GM10248 (cell line): ENCODE measurements at regions of chr7 and their contacts with region 1.

Region 1: GRCh38 chr7:29408841-29409243 is 154.8 kb upstream of the PRR15 start:
- DNase-seq: peak; percentile 66
- CTCF ChIP-seq: peak; percentile 83

Region 2: DNA sequence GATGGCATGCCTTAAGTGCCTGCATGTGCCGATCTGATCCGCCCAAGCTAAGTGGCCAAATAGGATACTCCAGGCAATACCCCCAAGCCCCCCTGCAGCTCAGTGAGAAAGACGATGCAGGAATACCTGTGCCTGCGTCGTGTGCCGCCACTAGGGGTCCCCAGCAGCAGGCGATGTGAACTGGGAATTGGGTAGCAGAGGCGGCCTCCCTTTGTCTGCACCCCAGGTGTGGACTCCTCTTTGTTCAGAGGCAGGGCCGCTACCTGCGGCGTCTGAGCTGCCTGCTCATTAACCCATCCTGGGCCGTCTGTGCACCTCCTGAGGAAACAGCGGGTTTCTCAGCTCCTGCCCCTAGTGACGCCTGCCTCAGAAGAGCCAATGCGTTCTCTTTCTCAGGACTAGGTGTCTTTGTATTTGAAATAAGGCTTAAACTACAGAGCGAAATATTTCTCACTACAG is 219.1 kb before region 1 on chr7:
- CTCF ChIA-PET with region 1: interaction called, 59 read pairs
- POLR2A ChIA-PET with region 1: no interaction called
- DNase-seq: peak; percentile 65
- CTCF ChIP-seq: peak; percentile 79

Region 3: GRCh38 chr7:29360633-29361625 is 47.9 kb before region 1 on chr7:
- CTCF ChIA-PET with region 1: interaction called, 10 read pairs
- POLR2A ChIA-PET with region 1: no interaction called
- DNase-seq: no peak
- CTCF ChIP-seq: no peak

Region 4: DNA sequence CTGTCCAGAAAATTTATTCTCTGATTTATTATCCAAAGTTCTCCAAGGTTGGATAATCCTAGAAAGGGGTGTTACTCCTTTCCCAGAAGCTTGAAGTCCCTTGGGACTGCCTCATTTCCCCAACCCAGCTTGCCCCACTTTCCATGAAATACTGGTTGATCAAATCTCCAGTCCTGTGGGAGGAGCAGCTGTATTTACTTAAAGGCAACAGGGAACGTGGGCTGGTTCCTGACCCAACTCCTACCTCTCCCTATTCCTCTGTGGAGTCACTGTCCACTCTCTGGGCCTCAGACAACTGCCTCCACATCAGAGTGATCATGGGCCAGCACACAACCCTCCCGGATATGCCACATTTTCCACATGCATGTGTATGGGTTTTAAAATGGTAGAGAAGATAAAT is 11.4 kb before region 1 on chr7:
- CTCF ChIA-PET with region 1: interaction called, 14 read pairs
- POLR2A ChIA-PET with region 1: no interaction called
- DNase-seq: no peak
- CTCF ChIP-seq: no peak

Region 5: DNA sequence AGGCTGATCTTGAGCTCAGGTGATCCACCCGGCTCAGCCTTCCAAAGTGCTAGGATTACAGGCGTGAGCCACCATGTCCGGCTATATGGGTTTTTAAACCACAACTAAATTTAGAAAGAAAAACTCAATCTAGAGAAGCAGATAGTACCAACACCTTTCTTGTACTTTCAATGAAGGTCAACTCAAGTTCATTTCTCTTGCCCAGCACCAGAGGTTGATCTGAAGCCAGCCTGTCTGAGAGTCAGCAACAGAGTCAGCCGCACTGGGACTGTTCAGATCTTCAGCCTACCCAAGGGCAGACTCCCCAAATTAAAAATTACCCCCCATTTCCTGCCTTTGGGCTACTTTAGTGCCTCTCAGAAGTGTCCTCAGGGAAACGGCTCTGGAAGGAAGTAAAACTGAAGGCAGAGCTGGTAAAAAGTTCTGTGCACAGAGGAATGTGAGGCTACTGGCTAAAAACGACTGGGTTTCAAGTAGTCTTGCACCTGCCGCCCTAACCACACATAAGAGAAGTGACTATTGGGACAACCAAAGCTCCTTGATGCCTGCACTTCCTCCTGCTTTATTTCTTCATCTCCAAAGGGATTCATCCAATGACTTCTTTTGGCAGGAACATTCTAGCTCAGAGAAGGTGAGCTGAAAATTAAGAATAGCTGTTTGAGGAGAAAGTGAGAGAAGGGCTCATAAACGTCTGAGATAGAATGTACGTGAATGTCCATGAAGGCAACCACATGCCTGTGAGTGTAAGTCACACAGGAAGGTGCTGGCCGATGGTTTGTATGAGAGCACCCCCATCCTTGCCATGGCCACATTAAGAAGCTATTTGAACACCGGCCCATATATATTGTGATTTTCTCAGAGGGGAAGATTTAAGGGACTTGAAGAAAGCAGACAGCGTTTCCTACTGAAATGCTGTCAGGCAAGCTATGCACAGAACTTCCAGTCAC is 12.4 kb after region 1 on chr7:
- CTCF ChIA-PET with region 1: interaction called, 19 read pairs
- POLR2A ChIA-PET with region 1: no interaction called
- DNase-seq: no peak
- CTCF ChIP-seq: no peak

Region 6: GRCh38 chr7:29442146-29442545 is 33.3 kb after region 1 on chr7:
- CTCF ChIA-PET with region 1: no interaction called
- POLR2A ChIA-PET with region 1: no interaction called
- DNase-seq: no peak
- CTCF ChIP-seq: no peak

Region 7: DNA sequence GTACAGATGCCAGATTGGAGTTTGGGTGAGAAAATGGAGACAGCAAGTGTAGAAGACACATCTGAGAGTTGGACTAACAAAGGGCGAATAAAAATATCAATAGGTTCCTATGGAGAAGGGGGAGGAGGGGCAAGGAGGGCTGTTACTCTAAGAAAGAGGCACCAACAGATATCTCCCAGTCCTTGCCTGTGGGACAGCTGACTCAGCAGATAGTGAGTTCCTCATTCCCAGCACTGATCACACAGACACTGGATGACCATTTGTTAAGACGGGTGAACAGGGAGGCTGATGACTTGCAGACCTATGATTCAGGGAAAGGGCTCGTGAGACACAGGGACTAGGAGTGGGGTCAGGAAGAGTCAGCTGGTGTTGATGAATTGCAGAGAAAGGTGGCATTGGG is 149.1 kb after region 1 on chr7:
- CTCF ChIA-PET with region 1: no interaction called
- POLR2A ChIA-PET with region 1: no interaction called
- DNase-seq: no peak
- CTCF ChIP-seq: no peak